Activated CD4-positive, alpha-beta memory T cell treated with anti-CD3 and anti-CD28 coated beads for 36 hours (primary cell): ENCODE measurements at regions of chr3 and their contacts with region 1.

Region 1: GRCh38 chr3:186930641-186931531 is 560 bp downstream of the ST6GAL1 start:
- DNase-seq: peak; percentile 79
- H3K4me3 Mint-ChIP-seq: peak overlapping the region; percentile 88
- H3K27ac Mint-ChIP-seq: peak overlapping the region; percentile 97
- H3K4me1 Mint-ChIP-seq: peaks cover 38% of the 10 kb centered on the region
- H3K27me3 Mint-ChIP-seq: no peaks in the 10 kb centered on the region

Region 2: GRCh38 chr3:186826976-186827731 is 103.7 kb before region 1 on chr3:
- CTCF ChIA-PET with region 1: interaction called, 7 read pairs
- POLR2A ChIA-PET with region 1: interaction called, 5 read pairs
- intact Hi-C with region 1: loop called (anchors 1 kb)
- DNase-seq: peak; percentile 89
- H3K4me3 Mint-ChIP-seq: peak overlapping the region; percentile 83
- H3K27ac Mint-ChIP-seq: peak overlapping the region; percentile 51
- H3K4me1 Mint-ChIP-seq: peaks cover 28% of the 10 kb centered on the region
- H3K27me3 Mint-ChIP-seq: peaks cover 44% of the 10 kb centered on the region

Region 3: DNA sequence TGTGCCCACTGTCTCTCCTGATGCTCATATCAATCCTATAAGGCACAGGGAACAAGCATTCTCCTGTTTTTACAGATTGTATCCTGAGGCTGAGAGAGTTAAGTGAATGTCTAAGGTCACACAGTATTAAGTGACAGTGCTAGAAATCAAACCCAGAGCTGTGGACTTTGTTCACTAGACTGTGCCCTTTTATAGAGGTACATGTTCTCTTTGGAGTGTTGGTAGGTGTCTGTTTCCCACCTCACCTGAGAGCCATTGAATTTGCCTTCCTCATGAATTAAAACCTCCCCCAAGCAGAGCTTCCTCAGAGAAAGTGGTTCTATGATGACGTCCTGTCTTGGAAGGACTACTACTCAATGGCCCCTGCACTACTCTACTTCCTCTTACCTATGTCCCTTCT is 75.9 kb before region 1 on chr3:
- CTCF ChIA-PET with region 1: interaction called, 35 read pairs
- POLR2A ChIA-PET with region 1: interaction called, 12 read pairs
- intact Hi-C with region 1: no loop called
- DNase-seq: no peak
- H3K4me3 Mint-ChIP-seq: no peak overlapping the region
- H3K27ac Mint-ChIP-seq: no peak overlapping the region
- H3K4me1 Mint-ChIP-seq: peaks cover 17% of the 10 kb centered on the region
- H3K27me3 Mint-ChIP-seq: no peaks in the 10 kb centered on the region

Region 4: GRCh38 chr3:186985661-186986364 is 54.9 kb after region 1 on chr3:
- CTCF ChIA-PET with region 1: no interaction called
- POLR2A ChIA-PET with region 1: interaction called, 5 read pairs
- intact Hi-C with region 1: loop called (anchors 5 kb)
- DNase-seq: no peak
- H3K4me3 Mint-ChIP-seq: no peak overlapping the region
- H3K27ac Mint-ChIP-seq: no peak overlapping the region
- H3K4me1 Mint-ChIP-seq: peaks cover 41% of the 10 kb centered on the region
- H3K27me3 Mint-ChIP-seq: no peaks in the 10 kb centered on the region

Region 5: GRCh38 chr3:187025656-187026316 is 94.9 kb after region 1 on chr3:
- CTCF ChIA-PET with region 1: interaction called, 9 read pairs
- POLR2A ChIA-PET with region 1: interaction called, 21 read pairs
- intact Hi-C with region 1: loop called (anchors 5 kb)
- DNase-seq: peak; percentile 59
- H3K4me3 Mint-ChIP-seq: peak overlapping the region; percentile 84
- H3K27ac Mint-ChIP-seq: peak overlapping the region; percentile 96
- H3K4me1 Mint-ChIP-seq: peaks cover 46% of the 10 kb centered on the region
- H3K27me3 Mint-ChIP-seq: no peaks in the 10 kb centered on the region

Region 6: GRCh38 chr3:187066228-187066995 is 135.5 kb after region 1 on chr3:
- CTCF ChIA-PET with region 1: no interaction called
- POLR2A ChIA-PET with region 1: no interaction called
- intact Hi-C with region 1: loop called (anchors 1 kb)
- DNase-seq: peak; percentile 61
- H3K4me3 Mint-ChIP-seq: no peak overlapping the region
- H3K27ac Mint-ChIP-seq: peak overlapping the region; percentile 66
- H3K4me1 Mint-ChIP-seq: peaks cover 60% of the 10 kb centered on the region
- H3K27me3 Mint-ChIP-seq: no peaks in the 10 kb centered on the region

Region 7: GRCh38 chr3:187164885-187165543 is 234.1 kb after region 1 on chr3:
- CTCF ChIA-PET with region 1: interaction called, 7 read pairs
- POLR2A ChIA-PET with region 1: no interaction called
- intact Hi-C with region 1: loop called (anchors 10 kb)
- DNase-seq: peak; percentile 20
- H3K4me3 Mint-ChIP-seq: no peak overlapping the region
- H3K27ac Mint-ChIP-seq: no peak overlapping the region
- H3K4me1 Mint-ChIP-seq: peaks cover 1% of the 10 kb centered on the region
- H3K27me3 Mint-ChIP-seq: peaks cover 3% of the 10 kb centered on the region